ENCODE measurements at regions of chr14 and their contacts with region 1.

Region 1: DNA sequence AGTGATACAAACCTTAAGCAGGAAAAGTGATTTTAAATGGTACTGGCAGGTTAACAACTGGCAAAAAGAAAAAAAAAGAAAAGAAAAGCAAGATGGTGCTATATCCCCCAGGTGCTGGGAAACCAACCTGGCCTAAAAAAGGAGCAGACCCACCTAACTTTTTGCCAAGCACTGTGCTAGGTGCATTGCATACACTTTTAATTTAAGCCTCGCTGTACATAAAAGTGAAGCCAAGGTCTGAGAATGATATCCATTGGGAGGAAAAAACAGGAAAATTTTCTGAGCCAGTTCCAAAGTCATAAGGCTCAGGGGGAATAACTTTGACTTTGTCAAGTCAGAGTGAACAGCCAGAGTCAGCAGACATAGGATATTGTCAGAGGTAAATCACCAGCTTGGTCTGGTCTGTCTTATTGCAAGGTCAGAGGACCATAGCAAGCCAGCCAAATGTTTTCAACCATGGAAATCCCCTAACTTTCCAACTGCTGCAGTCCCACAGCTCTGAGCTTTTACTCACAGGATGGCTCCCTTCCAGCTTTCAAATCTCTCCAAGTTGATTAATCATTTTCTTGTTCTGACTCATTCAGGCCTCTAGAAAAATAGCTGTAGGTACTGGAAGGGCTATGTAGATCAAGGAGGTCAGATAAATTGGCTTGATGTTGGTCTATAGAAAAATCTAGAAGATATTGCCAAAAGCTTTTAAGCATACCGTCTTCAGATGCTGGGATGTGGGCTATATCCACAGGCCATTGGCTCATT is 412.9 kb downstream of the RAD51B start:
- DNase-seq: no peak
- ATAC-seq: peak in 1 of 4 experiments; percentile 38
- H3K4me3 ChIP-seq: no peak overlapping the region
- H3K4me3 Mint-ChIP-seq: no peak overlapping the region
- H3K27ac ChIP-seq: no peak overlapping the region
- H3K27ac Mint-ChIP-seq: no peak overlapping the region
- H3K4me1 ChIP-seq: no peaks in the 10 kb centered on the region
- H3K4me1 Mint-ChIP-seq: no peaks in the 10 kb centered on the region
- H3K27me3 ChIP-seq: no peaks in the 10 kb centered on the region
- H3K27me3 Mint-ChIP-seq: no peaks in the 10 kb centered on the region

Region 2: DNA sequence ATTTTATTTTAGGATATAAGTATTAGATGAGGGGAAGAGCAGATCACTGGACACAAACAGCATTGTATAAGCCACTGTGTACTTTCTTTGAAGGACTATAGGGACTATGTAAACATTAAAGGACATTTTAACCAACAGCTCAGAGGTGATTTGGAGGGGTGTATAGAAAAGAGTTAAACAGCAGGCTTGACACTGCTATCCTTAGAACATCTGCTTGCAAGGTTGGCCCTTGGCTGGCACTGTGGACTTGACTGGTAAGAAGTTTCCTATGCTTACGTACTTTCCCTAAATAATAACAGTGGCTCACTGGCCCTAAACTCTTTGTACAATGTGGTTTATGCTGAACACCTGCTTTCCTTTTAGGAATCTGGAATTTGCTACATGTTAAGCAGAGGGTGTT is 444.8 kb before region 1 on chr14:
- CTCF ChIA-PET with region 1: interaction called in 1 of 2 experiments, 11 read pairs
- POLR2A ChIA-PET with region 1: no interaction called
- DNase-seq: no peak
- ATAC-seq: no peak
- H3K4me3 ChIP-seq: no peak overlapping the region
- H3K4me3 Mint-ChIP-seq: no peak overlapping the region
- H3K27ac ChIP-seq: no peak overlapping the region
- H3K27ac Mint-ChIP-seq: no peak overlapping the region
- H3K4me1 ChIP-seq: no peaks in the 10 kb centered on the region
- H3K4me1 Mint-ChIP-seq: no peaks in the 10 kb centered on the region
- H3K27me3 ChIP-seq: no peaks in the 10 kb centered on the region
- H3K27me3 Mint-ChIP-seq: no peaks in the 10 kb centered on the region

Region 3: GRCh38 chr14:67987606-67988005 is 244.9 kb before region 1 on chr14:
- CTCF ChIA-PET with region 1: no interaction called
- POLR2A ChIA-PET with region 1: no interaction called
- DNase-seq: no peak
- ATAC-seq: no peak
- H3K4me3 ChIP-seq: no peak overlapping the region
- H3K4me3 Mint-ChIP-seq: no peak overlapping the region
- H3K27ac ChIP-seq: no peak overlapping the region
- H3K27ac Mint-ChIP-seq: no peak overlapping the region
- H3K4me1 ChIP-seq: no peaks in the 10 kb centered on the region
- H3K4me1 Mint-ChIP-seq: no peaks in the 10 kb centered on the region
- H3K27me3 ChIP-seq: no peaks in the 10 kb centered on the region
- H3K27me3 Mint-ChIP-seq: no peaks in the 10 kb centered on the region

Region 4: DNA sequence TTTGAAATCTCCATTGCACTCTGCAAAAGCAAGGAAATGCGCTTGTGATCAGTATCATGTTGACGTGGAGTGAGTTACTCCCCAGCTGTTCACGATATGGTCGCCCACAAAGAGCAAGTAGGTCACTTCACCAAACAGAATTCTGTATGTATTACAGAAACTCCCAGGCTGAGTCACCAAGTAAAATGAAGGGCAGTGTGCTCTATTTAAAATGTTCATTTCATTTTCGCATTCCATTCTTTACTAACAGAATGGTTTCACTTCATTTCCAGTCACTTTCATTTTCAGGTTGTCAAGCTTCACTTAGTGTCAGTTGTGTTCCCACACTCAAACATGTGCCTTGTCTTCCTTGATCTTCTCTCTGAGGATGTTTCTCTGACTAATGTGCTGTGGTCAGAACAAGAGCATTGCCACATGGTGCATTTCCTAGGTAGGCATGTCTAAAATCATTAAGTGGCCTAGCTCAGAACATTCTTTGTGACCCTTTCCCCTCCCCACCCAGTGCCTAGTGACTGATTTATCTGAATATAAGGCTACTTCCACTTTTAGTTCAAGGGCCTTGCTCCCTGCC is 21.7 kb before region 1 on chr14:
- CTCF ChIA-PET with region 1: no interaction called
- POLR2A ChIA-PET with region 1: no interaction called
- DNase-seq: peak in 32 of 35 experiments; percentile 3 to 69 (median 20)
- ATAC-seq: peak; percentile 82 to 86 (median 83)
- H3K4me3 ChIP-seq: peak overlapping the region; percentile 25 to 30
- H3K4me3 Mint-ChIP-seq: peak overlapping the region; percentile 78 to 81 (median 78)
- H3K27ac ChIP-seq: peak overlapping the region; percentile 81
- H3K27ac Mint-ChIP-seq: peak overlapping the region; percentile 93 to 95
- H3K4me1 ChIP-seq: peaks cover 21 to 32% of the 10 kb centered on the region in 2 experiments
- H3K4me1 Mint-ChIP-seq: peaks cover 45 to 63% (median 54%) of the 10 kb centered on the region in 3 donors
- H3K27me3 ChIP-seq: no peaks in the 10 kb centered on the region
- H3K27me3 Mint-ChIP-seq: no peaks in the 10 kb centered on the region

Measured in T-cell (primary cell).